ENCODE measurements at regions of chr7 and their contacts with region 1.

Region 1: GRCh38 chr7:102236592-102237287 is 49.9 kb upstream of the SH2B2 start:
- DNase-seq: peak; percentile 95
- H3K4me3 ChIP-seq: no peak overlapping the region
- H3K27ac ChIP-seq: no peak overlapping the region; a peak in 1 of 4 replicates
- H3K4me1 ChIP-seq: peaks cover 0 to 2% of the 10 kb centered on the region in 2 experiments; a peak in 1 of 4 replicates
- H3K27me3 ChIP-seq: no peaks in the 10 kb centered on the region
- CTCF ChIP-seq: peak; percentile 97
- EP300 ChIP-seq: no peak
- RAD21 ChIP-seq: peak; percentile 99

Region 2: GRCh38 chr7:101688183-101688831 is 548.4 kb before region 1 on chr7:
- CTCF ChIA-PET with region 1: interaction called, 19 read pairs
- POLR2A ChIA-PET with region 1: no interaction called
- DNase-seq: peak; percentile 98
- H3K4me3 ChIP-seq: peak overlapping the region; percentile 14 to 53; a peak in 3 of 4 replicates
- H3K27ac ChIP-seq: no peak overlapping the region
- H3K4me1 ChIP-seq: peaks cover 0 to 6% of the 10 kb centered on the region in 2 experiments; a peak in 1 of 4 replicates
- H3K27me3 ChIP-seq: no peaks in the 10 kb centered on the region
- CTCF ChIP-seq: peak; percentile 95
- EP300 ChIP-seq: no peak
- RAD21 ChIP-seq: peak; percentile 92

Region 3: GRCh38 chr7:101743241-101743994 is 493.3 kb before region 1 on chr7:
- CTCF ChIA-PET with region 1: interaction called, 25 read pairs
- POLR2A ChIA-PET with region 1: no interaction called
- DNase-seq: peak; percentile 94
- H3K4me3 ChIP-seq: peak overlapping the region; percentile 54 to 90
- H3K27ac ChIP-seq: no peak overlapping the region
- H3K4me1 ChIP-seq: no peaks in the 10 kb centered on the region; a peak in 1 of 4 replicates
- H3K27me3 ChIP-seq: no peaks in the 10 kb centered on the region; the same call in 1 of the 2 replicates
- CTCF ChIP-seq: peak; percentile 86
- EP300 ChIP-seq: no peak; a peak in 2 of 4 replicates
- RAD21 ChIP-seq: peak; percentile 37

Region 4: DNA sequence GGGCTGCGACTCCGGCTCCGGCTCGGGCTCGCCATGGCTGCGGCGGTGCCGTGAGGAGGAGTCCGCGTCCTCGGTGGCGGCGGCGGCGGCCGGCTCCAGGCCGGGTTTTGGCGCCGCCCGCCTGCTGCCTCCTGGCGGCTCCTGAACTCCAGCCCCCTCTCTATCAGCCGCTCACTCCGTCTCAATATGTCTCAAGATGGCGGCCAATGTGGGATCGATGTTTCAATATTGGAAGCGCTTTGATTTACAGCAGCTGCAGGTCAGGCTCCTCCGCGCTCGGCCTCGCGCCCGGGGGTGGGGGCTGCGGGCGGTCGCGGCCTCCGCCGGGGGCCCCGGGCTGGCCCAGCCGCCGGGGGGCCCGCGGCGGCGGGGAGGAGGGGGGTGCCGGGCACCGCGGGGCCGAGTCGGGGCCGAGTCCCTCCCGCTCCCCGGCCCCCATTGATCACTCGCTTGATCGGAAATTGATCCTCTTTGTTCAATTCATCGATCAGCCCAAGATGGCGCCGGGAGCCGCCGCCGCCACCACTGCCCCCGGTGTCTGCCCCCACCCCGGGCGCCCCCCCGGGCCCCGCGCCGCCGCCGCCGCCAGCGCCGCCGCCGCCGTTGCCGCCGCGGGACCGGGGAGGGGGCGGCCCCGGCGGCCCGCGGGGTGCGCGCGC is 420.8 kb before region 1 on chr7:
- CTCF ChIA-PET with region 1: interaction called, 36 read pairs
- POLR2A ChIA-PET with region 1: no interaction called
- DNase-seq: peak; percentile 97
- H3K4me3 ChIP-seq: peak overlapping the region; percentile 53 to 97
- H3K27ac ChIP-seq: peak overlapping the region in 1 of 2 experiments; percentile 94; a peak in 2 of 4 replicates
- H3K4me1 ChIP-seq: peaks cover 18 to 42% of the 10 kb centered on the region in 2 experiments; a peak in 3 of 4 replicates
- H3K27me3 ChIP-seq: no peaks in the 10 kb centered on the region
- CTCF ChIP-seq: no peak
- EP300 ChIP-seq: peak in 1 of 2 experiments; percentile 60; a peak in 1 of 4 replicates
- RAD21 ChIP-seq: peak; percentile 25; the same call in 1 of the 2 replicates

Region 5: DNA sequence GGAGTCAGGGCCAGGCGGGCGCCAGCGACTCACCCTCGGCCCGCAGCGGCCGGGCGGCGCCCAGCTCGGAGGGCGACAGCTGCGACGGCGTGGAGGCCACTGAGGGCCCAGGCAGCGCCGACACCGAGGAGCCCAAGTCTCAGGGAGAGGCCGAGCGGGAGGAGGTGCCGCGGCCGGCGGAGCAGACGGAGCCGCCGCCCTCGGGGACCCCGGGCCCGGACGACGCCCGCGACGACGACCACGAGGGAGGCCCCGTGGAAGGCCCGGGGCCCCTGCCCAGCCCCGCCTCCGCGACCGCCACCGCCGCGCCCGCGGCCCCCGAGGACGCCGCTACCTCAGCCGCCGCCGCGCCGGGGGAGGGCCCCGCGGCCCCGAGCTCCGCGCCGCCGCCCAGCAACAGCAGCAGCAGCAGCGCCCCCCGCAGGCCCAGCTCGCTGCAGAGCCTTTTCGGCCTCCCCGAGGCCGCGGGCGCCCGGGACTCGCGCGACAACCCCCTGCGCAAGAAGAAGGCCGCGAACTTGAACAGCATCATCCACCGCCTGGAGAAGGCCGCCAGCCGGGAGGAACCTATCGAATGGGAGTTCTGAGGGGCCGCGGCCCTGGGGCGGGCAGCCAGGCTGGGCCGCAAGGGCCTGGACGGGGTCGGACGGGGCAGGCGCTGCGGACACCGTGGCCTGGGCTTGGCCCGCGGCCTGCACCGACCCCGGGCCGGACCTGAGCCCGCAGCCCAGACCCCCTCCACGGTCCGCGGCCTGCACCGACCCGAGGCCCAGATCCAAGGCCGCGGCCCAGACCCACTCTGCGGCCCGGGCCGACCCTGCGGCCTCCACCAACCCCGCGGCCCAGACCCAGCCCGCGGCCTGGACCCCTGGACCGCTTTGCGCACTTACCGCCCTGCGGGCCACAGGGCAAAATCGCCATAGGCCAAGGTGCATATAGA is 12.0 kb after region 1 on chr7:
- CTCF ChIA-PET with region 1: interaction called, 17 read pairs
- POLR2A ChIA-PET with region 1: no interaction called
- DNase-seq: peak; percentile 49
- H3K4me3 ChIP-seq: no peak overlapping the region
- H3K27ac ChIP-seq: no peak overlapping the region
- H3K4me1 ChIP-seq: peaks cover 0 to 34% of the 10 kb centered on the region in 2 experiments; a peak in 2 of 4 replicates
- H3K27me3 ChIP-seq: no peaks in the 10 kb centered on the region
- CTCF ChIP-seq: 0 out of 2 replicates have a peak, but pooled peaks have one; percentile 17
- EP300 ChIP-seq: no peak
- RAD21 ChIP-seq: no peak

Region 6: DNA sequence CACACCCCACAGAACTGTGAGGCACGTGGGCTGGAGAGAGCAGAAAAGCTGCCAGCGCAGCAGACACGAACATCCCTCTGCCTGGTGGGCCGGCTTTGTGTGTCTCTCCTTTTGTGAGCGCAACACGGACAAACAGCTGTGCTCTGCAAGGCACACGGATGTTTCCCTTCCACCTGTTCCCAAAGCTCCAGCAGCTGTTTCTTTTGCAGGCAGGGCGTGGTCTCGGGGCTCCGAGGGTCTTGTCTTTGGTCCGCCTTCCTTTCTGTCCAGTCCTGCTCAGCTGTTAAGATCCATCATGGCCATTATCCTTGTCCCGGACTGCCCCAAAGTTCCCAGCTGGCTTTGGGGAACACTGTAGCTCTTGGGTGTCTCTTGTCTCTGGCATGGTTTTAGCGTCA is 17.2 kb after region 1 on chr7:
- CTCF ChIA-PET with region 1: interaction called, 17 read pairs
- POLR2A ChIA-PET with region 1: no interaction called
- DNase-seq: no peak
- H3K4me3 ChIP-seq: no peak overlapping the region
- H3K27ac ChIP-seq: no peak overlapping the region; a peak in 1 of 4 replicates
- H3K4me1 ChIP-seq: peaks cover 0 to 49% of the 10 kb centered on the region in 2 experiments; a peak in 2 of 4 replicates
- H3K27me3 ChIP-seq: no peaks in the 10 kb centered on the region
- CTCF ChIP-seq: no peak
- EP300 ChIP-seq: no peak
- RAD21 ChIP-seq: no peak

Measured in SK-N-SH (cell line).